Caco-2 (cell line): ENCODE measurements at regions of chr1 and their contacts with region 1.

Region 1: GRCh38 chr1:164772635-164773034 is 213.7 kb downstream of the PBX1 start:
- DNase-seq: peak; percentile 53 to 76
- H3K4me3 ChIP-seq: no peak overlapping the region
- H3K4me3 Mint-ChIP-seq: no peak overlapping the region
- H3K27ac Mint-ChIP-seq: peak overlapping the region; percentile 78
- H3K4me1 ChIP-seq: peaks cover 84% of the 10 kb centered on the region
- H3K4me1 Mint-ChIP-seq: peaks cover 78% of the 10 kb centered on the region
- H3K27me3 ChIP-seq: no peaks in the 10 kb centered on the region
- H3K27me3 Mint-ChIP-seq: no peaks in the 10 kb centered on the region
- CTCF ChIP-seq: no peak

Region 2: GRCh38 chr1:164495905-164496304 is 276.7 kb before region 1 on chr1:
- CTCF ChIA-PET with region 1: no interaction called
- POLR2A ChIA-PET with region 1: no interaction called
- intact Hi-C with region 1: loop called (anchors 10 kb)
- DNase-seq: no peak
- H3K4me3 ChIP-seq: no peak overlapping the region
- H3K4me3 Mint-ChIP-seq: no peak overlapping the region
- H3K27ac Mint-ChIP-seq: no peak overlapping the region
- H3K4me1 ChIP-seq: 0 out of 2 replicates have a peak, but pooled peaks cover 5% of the 10 kb centered on the region
- H3K4me1 Mint-ChIP-seq: no peaks in the 10 kb centered on the region
- H3K27me3 ChIP-seq: no peaks in the 10 kb centered on the region
- H3K27me3 Mint-ChIP-seq: no peaks in the 10 kb centered on the region
- CTCF ChIP-seq: no peak

Region 3: DNA sequence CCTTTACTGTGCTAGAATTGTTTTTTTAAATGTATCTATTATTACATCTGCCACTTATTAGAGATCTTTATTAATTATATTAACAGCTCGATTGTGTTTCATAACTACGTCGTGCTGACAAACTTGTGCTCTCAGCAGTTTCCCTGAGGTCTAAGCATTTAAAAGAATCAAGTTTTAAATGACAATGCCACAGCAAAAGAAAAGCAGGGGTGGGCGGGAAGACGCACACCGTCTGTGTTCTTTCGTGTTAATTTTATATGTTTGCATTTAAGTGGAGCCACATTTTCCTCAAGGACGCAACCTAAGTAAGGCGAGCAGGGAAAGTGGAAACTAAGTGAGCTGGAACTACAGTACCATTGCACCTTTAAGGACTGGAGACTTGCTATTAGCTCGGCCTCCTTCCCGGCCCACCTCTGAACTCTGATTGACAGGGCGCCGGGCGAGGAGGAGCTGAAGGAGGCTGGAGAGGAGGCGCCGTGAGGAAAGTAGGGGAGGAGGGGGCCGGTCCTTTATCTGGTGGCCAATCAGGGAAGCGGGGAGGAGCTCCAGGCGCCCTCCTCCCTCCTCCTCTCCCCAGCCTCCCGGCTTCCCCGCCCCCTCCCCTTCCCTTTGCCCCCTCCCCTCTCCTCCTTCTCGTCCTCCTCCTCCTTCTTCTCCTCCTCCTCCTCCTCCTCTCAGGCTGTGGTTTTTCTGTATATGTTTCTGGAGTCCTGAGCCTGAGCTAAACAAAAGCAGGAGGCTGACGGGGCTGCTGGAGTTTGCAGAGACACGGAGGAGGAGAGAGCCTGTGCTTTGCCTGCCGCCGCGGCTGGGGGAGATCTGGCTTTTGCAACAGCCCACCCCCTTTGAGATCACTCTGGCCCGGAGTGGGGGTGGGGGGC is 213.9 kb before region 1 on chr1 and contains the start of gene PBX1:
- CTCF ChIA-PET with region 1: no interaction called
- POLR2A ChIA-PET with region 1: interaction called, 3 read pairs
- intact Hi-C with region 1: loop called (anchors 5 kb)
- DNase-seq: peak; percentile 97 to 99
- H3K4me3 ChIP-seq: peak within 1 kb of the TSS; percentile 74
- H3K4me3 Mint-ChIP-seq: peak within 1 kb of the TSS; percentile 81
- H3K27ac Mint-ChIP-seq: peak within 1 kb of the TSS; percentile 46
- H3K4me1 ChIP-seq: peaks cover 20% of the 10 kb centered on the region
- H3K4me1 Mint-ChIP-seq: peaks cover 7% of the 10 kb centered on the region
- H3K27me3 ChIP-seq: no peaks in the 10 kb centered on the region
- H3K27me3 Mint-ChIP-seq: no peaks in the 10 kb centered on the region
- CTCF ChIP-seq: no peak
- total RNA-seq, gene PBX1: 101 and 103 TPM in 2 replicates

Region 4: GRCh38 chr1:164611754-164612642 is 160.6 kb before region 1 on chr1:
- CTCF ChIA-PET with region 1: no interaction called
- POLR2A ChIA-PET with region 1: no interaction called
- intact Hi-C with region 1: loop called (anchors 5 kb)
- DNase-seq: peak; percentile 62 to 71
- H3K4me3 ChIP-seq: no peak overlapping the region
- H3K4me3 Mint-ChIP-seq: peak overlapping the region; percentile 14
- H3K27ac Mint-ChIP-seq: peak overlapping the region; percentile 45
- H3K4me1 ChIP-seq: peaks cover 41% of the 10 kb centered on the region
- H3K4me1 Mint-ChIP-seq: peaks cover 52% of the 10 kb centered on the region
- H3K27me3 ChIP-seq: no peaks in the 10 kb centered on the region
- H3K27me3 Mint-ChIP-seq: no peaks in the 10 kb centered on the region
- CTCF ChIP-seq: no peak

Region 5: GRCh38 chr1:164683235-164683634 is 89.4 kb before region 1 on chr1:
- CTCF ChIA-PET with region 1: no interaction called
- POLR2A ChIA-PET with region 1: no interaction called
- intact Hi-C with region 1: loop called (anchors 5 kb)
- DNase-seq: peak; percentile 78 to 85
- H3K4me3 ChIP-seq: no peak overlapping the region
- H3K4me3 Mint-ChIP-seq: peak overlapping the region; percentile 67
- H3K27ac Mint-ChIP-seq: peak overlapping the region; percentile 89
- H3K4me1 ChIP-seq: peaks cover 61% of the 10 kb centered on the region
- H3K4me1 Mint-ChIP-seq: peaks cover 42% of the 10 kb centered on the region
- H3K27me3 ChIP-seq: no peaks in the 10 kb centered on the region
- H3K27me3 Mint-ChIP-seq: no peaks in the 10 kb centered on the region
- CTCF ChIP-seq: no peak

Region 6: GRCh38 chr1:164707868-164708331 is 64.7 kb before region 1 on chr1:
- CTCF ChIA-PET with region 1: no interaction called
- POLR2A ChIA-PET with region 1: no interaction called
- intact Hi-C with region 1: loop called (anchors 5 kb)
- DNase-seq: no peak
- H3K4me3 ChIP-seq: no peak overlapping the region
- H3K4me3 Mint-ChIP-seq: no peak overlapping the region
- H3K27ac Mint-ChIP-seq: no peak overlapping the region
- H3K4me1 ChIP-seq: peaks cover 19% of the 10 kb centered on the region
- H3K4me1 Mint-ChIP-seq: peaks cover 16% of the 10 kb centered on the region
- H3K27me3 ChIP-seq: no peaks in the 10 kb centered on the region
- H3K27me3 Mint-ChIP-seq: no peaks in the 10 kb centered on the region
- CTCF ChIP-seq: no peak

Region 7: GRCh38 chr1:164748253-164748899 is 24.3 kb before region 1 on chr1:
- CTCF ChIA-PET with region 1: no interaction called
- POLR2A ChIA-PET with region 1: no interaction called
- intact Hi-C with region 1: no loop called
- DNase-seq: peak in 1 of 2 experiments; percentile 22
- H3K4me3 ChIP-seq: no peak overlapping the region
- H3K4me3 Mint-ChIP-seq: no peak overlapping the region
- H3K27ac Mint-ChIP-seq: no peak overlapping the region
- H3K4me1 ChIP-seq: peaks cover 31% of the 10 kb centered on the region
- H3K4me1 Mint-ChIP-seq: peaks cover 7% of the 10 kb centered on the region
- H3K27me3 ChIP-seq: no peaks in the 10 kb centered on the region
- H3K27me3 Mint-ChIP-seq: no peaks in the 10 kb centered on the region
- CTCF ChIP-seq: no peak

Region 8: DNA sequence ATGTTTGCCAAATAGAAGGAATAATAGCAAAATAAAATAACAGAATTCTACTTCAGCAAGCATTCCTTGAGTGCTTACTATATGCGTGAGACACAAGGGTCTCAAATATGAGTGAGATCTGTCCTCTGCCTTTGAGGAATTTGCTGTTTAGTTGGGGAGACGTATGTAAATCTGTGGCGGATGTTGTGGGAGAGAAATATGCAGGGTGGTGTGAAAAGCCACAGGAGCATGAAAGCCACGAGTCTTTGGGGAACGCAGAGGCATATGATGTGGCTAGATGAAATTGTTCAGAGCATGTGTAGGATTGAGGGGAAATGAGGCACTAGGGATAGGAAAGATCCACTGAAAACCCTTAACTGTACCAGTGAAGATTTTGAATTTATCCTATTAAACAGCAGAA is 30.7 kb after region 1 on chr1:
- CTCF ChIA-PET with region 1: no interaction called
- POLR2A ChIA-PET with region 1: no interaction called
- intact Hi-C with region 1: no loop called
- DNase-seq: no peak
- H3K4me3 ChIP-seq: no peak overlapping the region
- H3K4me3 Mint-ChIP-seq: no peak overlapping the region
- H3K27ac Mint-ChIP-seq: no peak overlapping the region
- H3K4me1 ChIP-seq: peaks cover 24% of the 10 kb centered on the region
- H3K4me1 Mint-ChIP-seq: peaks cover 20% of the 10 kb centered on the region
- H3K27me3 ChIP-seq: no peaks in the 10 kb centered on the region
- H3K27me3 Mint-ChIP-seq: no peaks in the 10 kb centered on the region
- CTCF ChIP-seq: no peak